WTC11 (cell line): ENCODE measurements at regions of chr16 and their contacts with region 1.

Region 1: GRCh38 chr16:29784901-29785500 is 5.5 kb upstream of the KIF22 start:
- DNase-seq: peak; percentile 94
- ATAC-seq: peak; percentile 95
- H3K4me3 Mint-ChIP-seq: peak overlapping the region; percentile 57
- H3K27ac Mint-ChIP-seq: no peak overlapping the region
- H3K4me1 Mint-ChIP-seq: peaks cover 26% of the 10 kb centered on the region
- H3K27me3 Mint-ChIP-seq: peaks cover 53% of the 10 kb centered on the region
- CTCF ChIP-seq: peak; percentile 69

Region 2: GRCh38 chr16:29653471-29653870 is 131.5 kb before region 1 on chr16:
- CTCF ChIA-PET with region 1: no interaction called
- POLR2A ChIA-PET with region 1: no interaction called
- DNase-seq: no peak
- ATAC-seq: no peak
- H3K4me3 Mint-ChIP-seq: no peak overlapping the region
- H3K27ac Mint-ChIP-seq: peak overlapping the region; percentile 88; the same call in 1 of the 2 replicates
- H3K4me1 Mint-ChIP-seq: peaks cover 13% of the 10 kb centered on the region
- H3K27me3 Mint-ChIP-seq: no peaks in the 10 kb centered on the region
- CTCF ChIP-seq: no peak

Region 3: DNA sequence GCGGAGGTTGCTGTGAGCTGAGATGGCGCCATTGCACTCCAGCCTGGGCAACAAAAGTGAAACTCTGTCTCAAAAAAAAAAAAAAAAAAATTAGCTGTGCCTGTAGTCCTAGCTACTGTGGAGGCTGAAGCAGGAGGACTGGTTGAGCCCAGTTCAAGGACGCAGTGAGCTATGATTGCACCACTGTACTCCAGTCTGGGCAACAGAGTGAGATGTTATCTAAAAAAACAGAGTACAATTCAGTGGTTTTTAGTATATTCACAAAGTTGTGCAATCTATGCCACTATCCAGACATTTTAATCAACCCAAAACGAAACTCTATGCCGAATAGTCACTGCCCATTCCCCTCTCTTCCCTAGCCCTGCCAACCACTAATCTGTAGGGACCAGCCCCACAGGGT is 64.3 kb before region 1 on chr16:
- CTCF ChIA-PET with region 1: interaction called, 11 read pairs
- POLR2A ChIA-PET with region 1: no interaction called
- DNase-seq: no peak
- ATAC-seq: no peak
- H3K4me3 Mint-ChIP-seq: no peak overlapping the region
- H3K27ac Mint-ChIP-seq: peak overlapping the region; percentile 89; the same call in 1 of the 2 replicates
- H3K4me1 Mint-ChIP-seq: peaks cover 58% of the 10 kb centered on the region
- H3K27me3 Mint-ChIP-seq: no peaks in the 10 kb centered on the region
- CTCF ChIP-seq: no peak

Region 4: GRCh38 chr16:29729116-29729521 is 55.9 kb before region 1 on chr16:
- CTCF ChIA-PET with region 1: interaction called, 16 read pairs
- POLR2A ChIA-PET with region 1: interaction called, 4 read pairs
- DNase-seq: no peak
- ATAC-seq: peak; percentile 90
- H3K4me3 Mint-ChIP-seq: no peak overlapping the region
- H3K27ac Mint-ChIP-seq: peak overlapping the region; percentile 71
- H3K4me1 Mint-ChIP-seq: peaks cover 30% of the 10 kb centered on the region
- H3K27me3 Mint-ChIP-seq: no peaks in the 10 kb centered on the region
- CTCF ChIP-seq: no peak; the same call in 1 of the 2 replicates

Region 5: DNA sequence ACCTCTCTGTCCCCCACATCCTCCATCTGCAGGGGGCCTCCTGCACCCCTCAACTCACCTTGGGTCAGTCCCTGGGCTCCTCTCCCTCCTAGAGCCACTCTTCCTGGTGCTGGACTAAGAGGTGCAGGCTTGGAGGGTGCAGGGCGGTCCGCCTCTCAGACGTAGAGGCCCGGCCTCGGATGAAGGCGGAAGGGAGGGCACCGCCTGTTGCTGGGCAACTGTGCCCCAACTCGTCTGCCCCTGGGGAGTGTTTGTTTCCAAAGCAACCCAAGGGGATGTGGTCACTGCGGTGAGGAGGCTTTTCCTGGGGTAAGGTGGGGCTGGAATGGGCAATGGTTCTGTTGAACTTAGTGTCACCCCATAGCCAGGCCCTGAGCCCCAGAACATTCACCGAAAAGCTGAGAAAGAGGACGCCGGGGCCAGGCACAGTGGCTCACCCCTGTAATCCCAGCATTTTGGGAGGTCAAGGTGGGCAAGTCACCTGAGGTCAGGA is 39.1 kb before region 1 on chr16 and contains the start of gene C16orf54:
- CTCF ChIA-PET with region 1: interaction called, 11 read pairs
- POLR2A ChIA-PET with region 1: interaction called, 5 read pairs
- DNase-seq: no peak
- ATAC-seq: peak; percentile 5
- H3K4me3 Mint-ChIP-seq: no peak within 1 kb of the TSS
- H3K27ac Mint-ChIP-seq: peak within 1 kb of the TSS; percentile 45; the same call in 1 of the 2 replicates
- H3K4me1 Mint-ChIP-seq: peaks cover 16% of the 10 kb centered on the region
- H3K27me3 Mint-ChIP-seq: peaks cover 8% of the 10 kb centered on the region
- CTCF ChIP-seq: no peak
- total RNA-seq, gene C16orf54: 0.09 to 0.14 TPM (median 0.11 TPM) in 3 replicates

Region 6: DNA sequence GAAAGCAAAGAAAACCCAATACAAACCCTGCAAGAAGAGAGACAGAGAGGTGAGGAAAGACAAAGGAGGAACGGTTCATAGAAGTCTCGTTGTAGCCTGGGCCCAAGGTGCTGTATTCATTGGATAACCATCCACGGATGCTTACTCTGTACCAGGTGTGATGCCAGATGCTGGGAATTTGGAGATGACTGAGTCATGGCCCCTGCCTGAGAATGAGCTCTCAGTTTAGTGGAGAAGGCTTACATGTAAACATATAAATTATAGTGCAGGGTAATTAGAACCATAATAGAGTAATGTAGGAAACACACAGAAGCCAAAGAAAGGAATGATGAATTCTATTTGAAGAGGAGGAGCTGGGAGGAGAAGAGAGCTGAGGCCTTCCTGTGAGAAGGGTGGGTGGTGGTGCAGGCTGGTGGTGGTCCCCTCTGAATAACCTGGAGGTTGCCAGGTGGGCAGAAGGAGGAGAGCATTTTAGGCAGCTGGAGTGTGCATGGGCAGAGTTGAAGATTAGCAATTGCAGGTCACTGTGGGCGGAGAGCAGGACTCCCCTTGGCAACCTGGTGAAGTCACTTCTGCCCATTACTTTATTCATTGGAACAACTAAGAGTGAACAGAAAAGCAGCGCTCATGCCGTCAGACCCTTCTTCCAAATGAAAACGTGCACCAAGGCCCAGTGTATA is 14.6 kb before region 1 on chr16:
- CTCF ChIA-PET with region 1: interaction called, 10 read pairs
- POLR2A ChIA-PET with region 1: no interaction called
- DNase-seq: no peak
- ATAC-seq: no peak
- H3K4me3 Mint-ChIP-seq: no peak overlapping the region
- H3K27ac Mint-ChIP-seq: no peak overlapping the region; the same call in 1 of the 2 replicates
- H3K4me1 Mint-ChIP-seq: peaks cover 6% of the 10 kb centered on the region
- H3K27me3 Mint-ChIP-seq: no peaks in the 10 kb centered on the region; the same call in 1 of the 2 replicates
- CTCF ChIP-seq: no peak

Region 7: GRCh38 chr16:29805378-29806098 is 20.5 kb after region 1 on chr16:
- CTCF ChIA-PET with region 1: interaction called, 16 read pairs
- POLR2A ChIA-PET with region 1: interaction called, 5 read pairs
- DNase-seq: peak; percentile 97
- ATAC-seq: peak; percentile 78
- H3K4me3 Mint-ChIP-seq: peak overlapping the region; percentile 99
- H3K27ac Mint-ChIP-seq: peak overlapping the region; percentile 100
- H3K4me1 Mint-ChIP-seq: peaks cover 44% of the 10 kb centered on the region
- H3K27me3 Mint-ChIP-seq: no peaks in the 10 kb centered on the region
- CTCF ChIP-seq: no peak

Region 8: DNA sequence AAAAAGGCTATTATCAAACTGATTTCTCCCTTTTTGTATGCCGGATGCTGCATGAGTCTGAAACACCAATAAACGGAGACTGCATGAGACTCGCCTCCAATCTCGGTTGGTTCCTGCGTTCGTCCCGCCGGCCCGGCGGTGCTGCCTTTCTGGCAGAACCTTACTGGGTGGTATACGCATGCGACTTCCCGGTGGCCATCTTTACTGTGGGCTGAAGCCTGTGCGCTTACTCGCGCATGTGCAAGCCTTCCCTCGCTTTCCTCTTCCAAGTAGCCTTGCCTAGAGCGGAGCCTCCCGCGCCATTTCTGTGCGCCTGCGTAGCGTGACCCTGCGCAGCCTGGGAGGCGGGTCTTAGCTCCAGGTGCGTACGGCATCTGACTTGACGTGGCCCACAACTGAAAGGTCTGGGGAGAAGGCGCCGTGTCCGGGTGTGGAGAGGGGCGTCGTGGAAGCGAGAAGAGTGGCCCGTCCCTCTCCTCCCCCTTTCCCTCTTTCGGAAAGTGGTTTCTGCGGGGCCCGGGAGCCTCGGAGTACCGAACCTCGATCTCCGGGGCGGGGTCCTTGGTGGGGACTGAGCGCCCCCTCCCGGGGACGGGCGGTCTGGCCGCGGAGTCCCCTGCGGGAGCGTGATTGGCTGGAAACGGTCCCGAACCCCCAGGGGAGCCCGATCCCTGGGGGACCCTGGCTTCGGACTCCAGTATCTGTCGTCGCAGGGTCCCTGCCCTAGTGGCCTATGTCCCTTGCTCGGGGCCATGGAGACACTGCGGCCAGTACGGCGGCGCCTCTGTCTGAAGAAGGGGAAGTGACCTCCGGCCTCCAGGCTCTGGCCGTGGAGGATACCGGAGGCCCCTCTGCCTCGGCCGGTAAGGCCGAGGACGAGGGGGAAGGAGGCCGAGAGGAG is 31.0 kb after region 1 on chr16 and contains the start of gene PAGR1:
- CTCF ChIA-PET with region 1: interaction called, 28 read pairs
- POLR2A ChIA-PET with region 1: no interaction called
- DNase-seq: peak; percentile 98
- ATAC-seq: peak; percentile 56
- H3K4me3 Mint-ChIP-seq: peak within 1 kb of the TSS; percentile 94
- H3K27ac Mint-ChIP-seq: peak within 1 kb of the TSS; percentile 100
- H3K4me1 Mint-ChIP-seq: peaks cover 56% of the 10 kb centered on the region
- H3K27me3 Mint-ChIP-seq: no peaks in the 10 kb centered on the region; the same call in 1 of the 2 replicates
- CTCF ChIP-seq: peak; percentile 81
- total RNA-seq, gene PAGR1: 60.1 to 69.0 TPM (median 66.8 TPM) in 3 replicates